Tibial artery (tissue), 4 donors: ENCODE measurements at regions of chr4 and their contacts with region 1.

Region 1: DNA sequence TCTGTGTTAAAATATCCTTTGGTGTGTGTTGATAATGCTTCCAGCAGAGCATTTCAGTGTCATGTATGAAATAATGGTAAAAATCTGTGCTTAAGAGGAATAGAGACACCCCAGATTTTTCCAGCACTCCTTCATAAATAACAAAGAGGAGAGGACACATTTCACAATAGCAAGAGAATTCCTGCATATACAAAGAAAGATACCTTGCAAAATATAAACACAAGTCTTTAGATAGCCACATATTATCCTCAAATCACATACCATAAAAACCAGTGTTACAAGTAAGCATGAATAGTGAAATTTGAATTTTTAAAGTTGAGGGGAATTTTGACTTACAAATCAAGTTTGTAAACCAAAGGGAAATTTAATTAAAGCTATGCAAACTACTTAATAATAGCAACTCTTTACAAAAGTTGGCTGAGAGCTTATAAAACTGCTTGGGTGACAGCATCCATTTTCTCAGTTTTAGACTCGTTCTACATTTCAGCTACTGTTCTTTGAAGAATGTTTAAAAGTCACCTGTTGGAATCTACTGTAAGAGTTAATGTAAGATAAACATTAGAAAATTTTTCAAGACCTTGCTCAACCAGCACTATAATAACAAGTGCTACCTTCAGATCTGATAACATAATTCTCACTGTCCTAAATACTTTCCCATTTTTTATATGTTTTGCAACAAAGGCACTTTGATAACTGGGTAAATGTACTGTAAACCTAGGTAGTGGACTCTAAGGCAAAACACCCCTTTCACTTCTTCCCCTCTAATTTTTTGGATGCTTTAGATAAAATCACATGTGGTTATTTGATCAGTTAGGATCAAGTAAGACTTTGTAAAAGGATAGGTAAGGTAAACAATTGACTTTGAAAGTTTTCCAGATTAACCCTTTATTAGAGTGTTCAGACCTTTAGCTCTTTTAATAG is 3.8 kb downstream of the APELA start:
- DNase-seq: no peak
- H3K4me3 ChIP-seq: no peak overlapping the region
- H3K27ac ChIP-seq: no peak overlapping the region
- H3K4me1 ChIP-seq: no peaks in the 10 kb centered on the region
- H3K27me3 ChIP-seq: peaks cover 0 to 3% of the 10 kb centered on the region in 2 donors
- CTCF ChIP-seq: no peak

Region 2: DNA sequence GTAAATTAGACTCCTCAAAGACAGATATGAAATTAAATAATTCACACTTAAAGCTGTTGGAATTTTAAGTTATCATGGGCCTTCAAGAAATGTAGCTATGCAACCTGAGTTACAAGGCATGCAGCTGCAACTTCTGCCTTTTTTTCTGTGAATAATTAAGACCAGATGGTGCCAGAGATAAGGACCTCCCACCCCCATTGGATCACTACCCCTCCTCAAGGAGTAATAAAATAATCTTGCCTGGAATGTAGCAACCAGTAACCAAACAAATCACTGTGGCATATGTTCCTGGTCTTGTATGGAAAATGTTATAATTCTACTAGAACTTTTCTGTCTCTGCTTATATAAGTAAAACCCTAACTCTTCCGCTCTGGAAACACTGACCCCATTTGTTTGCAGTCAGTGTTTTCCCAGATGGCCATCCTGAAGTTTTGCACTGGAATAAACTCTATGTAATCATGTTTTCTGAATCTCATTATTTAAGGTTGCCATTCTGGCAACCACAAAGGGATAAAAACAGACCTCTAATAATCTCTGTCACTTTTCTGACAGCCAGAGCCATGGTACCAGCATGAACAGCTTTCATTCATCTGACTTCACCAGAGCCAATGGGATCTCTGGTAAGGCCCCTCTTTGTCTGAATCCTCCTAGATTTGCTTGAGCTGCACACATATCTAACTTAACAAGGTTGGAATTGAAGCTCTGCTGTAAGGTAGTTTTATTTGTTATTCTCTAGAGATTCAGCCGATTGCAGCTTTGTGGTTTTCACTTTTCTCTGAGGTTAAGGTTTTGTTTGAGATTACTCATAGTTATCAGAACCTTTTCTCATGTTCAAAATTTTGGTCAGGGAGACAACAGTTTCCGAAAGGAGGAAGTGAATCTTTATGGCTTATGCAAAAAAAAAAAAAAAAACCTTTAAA is 1988.7 kb before region 1 on chr4:
- intact Hi-C with region 1: loop called (anchors 5 kb)
- DNase-seq: no peak
- H3K4me3 ChIP-seq: no peak overlapping the region
- H3K27ac ChIP-seq: no peak overlapping the region
- H3K4me1 ChIP-seq: no peaks in the 10 kb centered on the region
- H3K27me3 ChIP-seq: no peaks in the 10 kb centered on the region
- CTCF ChIP-seq: no peak

Region 3: DNA sequence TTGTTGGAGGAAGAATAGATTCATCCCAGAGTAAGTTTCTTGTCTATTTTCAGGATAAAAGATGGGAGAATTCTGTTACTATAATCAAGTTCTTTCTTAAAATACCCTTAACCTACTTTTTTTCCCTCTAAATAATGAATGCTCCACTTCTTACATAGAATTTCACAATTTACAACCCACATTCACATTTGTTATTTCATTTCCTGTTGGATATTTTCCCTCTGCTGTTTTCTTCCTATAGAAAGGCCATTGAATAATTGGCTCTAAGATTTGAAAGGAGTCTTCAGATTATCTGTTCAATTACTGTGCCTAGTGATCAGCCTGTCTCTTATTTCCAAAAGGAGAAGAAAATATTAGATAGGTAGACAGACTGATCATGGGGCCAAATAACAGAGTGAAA is 577.7 kb after region 1 on chr4:
- intact Hi-C with region 1: no loop called
- DNase-seq: no peak
- H3K4me3 ChIP-seq: no peak overlapping the region
- H3K27ac ChIP-seq: no peak overlapping the region
- H3K4me1 ChIP-seq: peaks cover 0 to 48% (median 17%) of the 10 kb centered on the region in 4 donors
- H3K27me3 ChIP-seq: no peaks in the 10 kb centered on the region
- CTCF ChIP-seq: no peak